Aorta (tissue), 5 donors: ENCODE measurements at regions of chrX and their contacts with region 1.

Region 1: DNA sequence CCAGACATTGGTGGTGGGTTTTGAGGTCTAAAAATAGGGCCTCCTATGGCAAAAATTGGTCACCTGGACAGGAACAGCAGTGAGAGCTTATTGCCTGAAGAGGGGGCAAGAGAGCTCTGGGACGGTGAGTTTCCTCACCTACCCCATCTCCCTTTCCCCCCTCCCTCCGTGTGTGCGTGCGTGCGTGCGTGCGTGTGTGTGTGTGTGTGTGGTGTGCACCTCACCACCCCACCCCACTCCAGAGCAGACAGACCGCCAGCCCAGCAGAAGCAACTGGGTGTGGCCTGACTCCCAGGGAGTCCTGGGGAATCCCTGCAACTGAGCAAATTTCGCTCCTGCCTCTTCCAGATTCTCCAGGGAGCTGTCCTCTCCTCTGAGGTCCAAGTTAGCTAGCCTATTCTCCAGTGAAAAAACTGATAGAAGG is 44.7 kb downstream of the PRPS1 start:
- DNase-seq: peak; percentile 78 to 86
- ATAC-seq: peak; percentile 51
- H3K4me3 ChIP-seq: no peak overlapping the region
- H3K27ac ChIP-seq: peak overlapping the region in 1 of 2 donors; percentile 92
- H3K4me1 ChIP-seq: peaks cover 0 to 2% of the 10 kb centered on the region in 2 donors
- H3K27me3 ChIP-seq: no peaks in the 10 kb centered on the region

Region 2: DNA sequence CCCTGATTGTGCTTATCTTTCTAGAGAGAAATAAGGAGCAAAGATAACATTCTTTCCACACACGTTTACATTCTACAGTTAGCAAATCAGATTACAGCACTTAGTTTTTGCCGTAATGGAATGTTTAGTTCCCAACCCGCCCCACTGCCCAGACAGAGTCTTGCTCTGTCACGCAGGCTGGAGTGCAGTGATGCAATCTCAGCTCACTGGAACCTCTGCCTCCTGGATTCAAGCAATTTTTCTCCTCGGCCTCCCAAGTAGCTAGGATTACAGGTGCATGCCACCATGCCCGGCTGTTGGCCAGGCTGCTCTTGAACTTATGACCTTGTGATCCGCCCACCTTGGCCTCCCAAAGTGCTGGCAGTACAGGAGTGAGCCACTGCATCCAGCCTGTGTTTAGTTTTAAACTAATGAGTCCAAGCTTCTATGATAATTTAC is 53.1 kb before region 1 on chrX:
- intact Hi-C with region 1: no loop called
- DNase-seq: no peak
- ATAC-seq: no peak
- H3K4me3 ChIP-seq: no peak overlapping the region
- H3K27ac ChIP-seq: no peak overlapping the region
- H3K4me1 ChIP-seq: no peaks in the 10 kb centered on the region
- H3K27me3 ChIP-seq: no peaks in the 10 kb centered on the region

Region 3: GRCh38 chrX:107776649-107777535 is 103.9 kb after region 1 on chrX:
- intact Hi-C with region 1: loop called (anchors 5 kb)
- DNase-seq: peak; percentile 83 to 86
- ATAC-seq: peak; percentile 90
- H3K4me3 ChIP-seq: peak overlapping the region; percentile 32 to 59
- H3K27ac ChIP-seq: no peak overlapping the region
- H3K4me1 ChIP-seq: peaks cover 0 to 2% of the 10 kb centered on the region in 2 donors
- H3K27me3 ChIP-seq: no peaks in the 10 kb centered on the region